ENCODE measurements at regions of chr10 and their contacts with region 1.

Region 1: DNA sequence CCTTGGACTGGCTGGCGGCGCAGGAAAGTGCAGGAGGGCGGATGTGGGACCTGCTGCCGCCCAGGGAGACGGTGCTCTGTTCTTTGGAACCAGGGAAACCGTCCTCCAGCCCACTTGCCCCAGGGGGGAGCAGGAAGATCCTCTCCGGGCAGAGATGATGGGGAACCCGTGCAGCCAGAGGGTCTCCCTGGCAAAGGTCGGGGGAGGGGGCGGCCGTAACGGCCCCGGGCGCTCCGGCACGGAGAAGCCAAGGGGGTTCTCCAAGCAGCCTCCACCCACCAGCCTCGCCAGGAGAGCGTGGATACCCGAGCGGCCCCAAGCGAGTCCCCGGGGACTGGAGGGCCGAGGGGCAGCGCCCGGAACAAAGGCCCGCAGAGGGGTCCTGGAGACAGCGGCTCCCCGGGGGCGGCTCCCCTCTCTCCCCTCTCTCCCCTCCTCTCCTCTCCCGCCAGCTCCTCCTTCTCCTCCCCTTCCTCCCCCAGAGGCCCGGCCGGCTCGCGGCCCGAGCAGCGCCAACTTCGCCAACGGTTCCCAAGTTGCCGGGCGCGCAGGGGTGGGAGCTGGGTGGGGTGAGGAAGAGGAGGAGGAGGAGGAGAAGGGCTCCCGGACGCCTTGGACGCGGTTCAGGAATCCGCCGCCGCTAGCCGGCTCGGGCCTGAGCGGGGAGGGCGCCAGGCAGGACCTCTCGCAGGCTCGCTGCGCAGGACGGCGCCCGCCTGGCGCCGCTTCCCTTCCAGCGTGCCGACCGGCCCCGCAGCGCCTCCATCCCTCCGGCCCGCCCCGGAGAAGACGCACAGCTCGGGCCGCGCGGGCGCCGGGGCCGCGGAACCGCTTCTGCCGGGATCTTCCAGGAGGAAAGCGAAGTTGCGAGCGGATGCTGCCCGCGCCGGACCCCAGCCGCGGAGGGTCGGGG is at the start of gene CHST3:
- DNase-seq: no peak
- H3K4me3 ChIP-seq: peak within 1 kb of the TSS; percentile 79 to 93 (median 81)
- H3K27ac ChIP-seq: peak within 1 kb of the TSS; percentile 89 to 96
- H3K4me1 ChIP-seq: peaks cover 0 to 8% of the 10 kb centered on the region in 2 donors
- H3K27me3 ChIP-seq: no peaks in the 10 kb centered on the region
- CTCF ChIP-seq: no peak
- POLR2A ChIP-seq: no peak
- total RNA-seq, gene CHST3: 20.2 to 34.5 (median 25.6) TPM

Region 2: DNA sequence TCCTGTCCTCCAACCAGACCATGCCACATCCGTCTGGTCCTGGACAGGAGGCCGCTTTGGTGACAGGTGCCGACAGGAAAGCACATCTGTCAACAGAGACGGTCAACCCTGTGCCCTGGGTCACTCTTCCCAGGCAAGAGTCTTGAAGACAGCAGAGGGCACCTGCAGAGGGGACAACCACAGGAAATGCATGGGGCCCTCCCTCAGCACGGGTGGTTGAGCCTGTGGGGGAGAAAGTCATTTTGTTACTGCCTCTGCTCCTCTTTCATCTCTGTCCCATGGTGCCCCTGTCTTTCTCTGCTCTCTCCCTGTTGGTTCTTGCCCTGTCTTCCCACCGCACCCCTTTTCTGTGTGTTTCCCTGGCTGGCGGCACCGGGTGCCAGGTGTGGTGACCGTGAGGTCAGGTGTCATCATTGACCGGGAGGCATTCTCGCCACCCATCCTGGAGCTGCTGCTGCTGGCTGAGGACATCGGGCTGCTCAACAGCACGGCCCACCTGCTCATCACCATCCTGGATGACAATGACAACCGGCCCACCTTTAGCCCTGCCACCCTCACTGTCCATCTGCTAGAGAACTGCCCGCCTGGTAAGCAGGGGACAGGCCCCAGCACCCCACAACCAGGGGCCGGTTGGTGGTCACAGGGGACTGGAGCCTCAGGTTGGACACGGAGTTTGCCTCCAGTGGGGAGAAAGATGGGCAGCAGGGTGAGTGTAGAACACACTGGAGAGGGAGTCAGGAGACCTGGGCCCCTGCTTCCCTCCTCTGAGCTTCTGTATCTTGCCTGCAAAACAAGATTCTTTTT is 173.1 kb before region 1 on chr10:
- intact Hi-C with region 1: no loop called
- DNase-seq: no peak
- H3K4me3 ChIP-seq: no peak overlapping the region
- H3K27ac ChIP-seq: no peak overlapping the region
- H3K4me1 ChIP-seq: no peaks in the 10 kb centered on the region
- H3K27me3 ChIP-seq: no peaks in the 10 kb centered on the region
- CTCF ChIP-seq: no peak
- POLR2A ChIP-seq: no peak

Region 3: GRCh38 chr10:72048450-72049124 is 84.6 kb after region 1 on chr10:
- intact Hi-C with region 1: loop called (anchors 5 kb)
- DNase-seq: peak; percentile 86 to 93
- H3K4me3 ChIP-seq: no peak overlapping the region
- H3K27ac ChIP-seq: no peak overlapping the region
- H3K4me1 ChIP-seq: peaks cover 0 to 7% of the 10 kb centered on the region in 2 donors
- H3K27me3 ChIP-seq: no peaks in the 10 kb centered on the region
- CTCF ChIP-seq: peak; percentile 100
- POLR2A ChIP-seq: no peak

Region 4: GRCh38 chr10:72925951-72926465 is 962.0 kb after region 1 on chr10:
- intact Hi-C with region 1: no loop called
- DNase-seq: no peak
- H3K4me3 ChIP-seq: no peak overlapping the region
- H3K27ac ChIP-seq: no peak overlapping the region
- H3K4me1 ChIP-seq: no peaks in the 10 kb centered on the region
- H3K27me3 ChIP-seq: no peaks in the 10 kb centered on the region
- CTCF ChIP-seq: no peak
- POLR2A ChIP-seq: no peak

Measured in breast epithelium (tissue), 4 donors.